AG04449 (cell line): ENCODE measurements at regions of chr4 and their contacts with region 1.

Region 1: GRCh38 chr4:15956179-15956850 is 6.7 kb downstream of the FGFBP2 start:
- DNase-seq: peak; percentile 5
- H3K4me3 ChIP-seq: no peak overlapping the region
- CTCF ChIP-seq: peak; percentile 94

Region 2: DNA sequence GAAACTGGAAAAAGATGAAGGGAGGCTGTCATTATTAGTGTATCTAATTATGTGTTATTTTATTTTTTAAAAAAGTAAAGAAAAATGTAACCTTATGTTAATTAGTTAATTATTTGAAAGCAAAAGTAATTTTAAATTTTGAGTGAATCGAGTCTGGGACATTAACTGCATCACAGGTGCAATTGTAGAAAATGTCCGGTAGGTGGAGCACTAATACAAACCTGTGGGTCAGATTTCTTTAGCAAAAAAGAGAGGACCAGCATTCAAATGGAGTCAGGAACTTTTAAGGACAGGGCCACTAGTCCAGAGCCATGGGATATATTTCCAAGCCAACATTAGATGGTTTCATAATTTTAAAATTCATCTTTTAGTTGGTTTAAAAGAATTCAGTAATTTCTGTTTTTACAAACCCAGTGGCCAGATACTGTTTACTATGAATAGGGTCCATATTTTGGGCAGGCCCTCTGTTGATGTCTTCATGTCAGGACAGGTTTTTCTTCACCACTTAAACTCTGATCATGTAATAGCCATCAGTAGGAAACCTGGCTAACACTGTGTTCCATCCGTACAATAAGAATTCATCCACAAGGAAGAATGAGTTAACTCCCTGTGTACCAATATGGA is 226.3 kb before region 1 on chr4:
- CTCF ChIA-PET with region 1: interaction called, 11 read pairs
- POLR2A ChIA-PET with region 1: no interaction called
- DNase-seq: no peak
- H3K4me3 ChIP-seq: no peak overlapping the region
- CTCF ChIP-seq: peak; percentile 59

Region 3: DNA sequence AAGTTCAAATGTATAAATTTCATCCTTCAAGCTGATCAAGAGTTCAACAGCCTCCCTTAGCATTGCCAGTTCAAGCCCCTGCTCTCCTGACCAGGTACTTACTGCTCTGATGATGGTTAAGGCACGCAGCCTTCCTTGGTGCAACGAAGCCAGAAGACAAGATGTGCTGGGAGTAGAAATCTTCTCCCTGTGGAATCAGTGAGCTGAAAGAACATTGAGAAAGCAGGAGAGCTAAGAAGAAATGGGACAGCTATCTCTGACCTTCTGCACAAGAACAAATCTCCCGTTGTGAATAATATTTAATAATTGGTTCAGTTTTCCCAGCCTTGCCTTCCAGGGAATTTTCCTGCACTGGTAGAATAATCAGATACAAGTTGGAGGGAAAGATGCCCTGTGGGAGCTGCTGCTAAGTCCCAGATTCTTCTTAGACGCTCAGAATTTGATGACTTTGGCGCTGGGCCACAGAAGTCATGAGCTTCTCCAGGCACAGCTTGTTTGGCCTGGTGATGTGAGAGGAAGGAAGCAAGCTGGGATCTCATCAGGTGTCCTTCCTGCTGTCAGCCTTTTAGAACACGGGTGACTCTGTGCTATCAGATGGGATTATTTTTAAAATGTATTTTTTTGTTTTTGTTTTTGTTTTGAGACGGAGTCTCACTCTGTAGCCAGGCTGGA is 100.4 kb before region 1 on chr4:
- CTCF ChIA-PET with region 1: interaction called, 14 read pairs
- POLR2A ChIA-PET with region 1: no interaction called
- DNase-seq: no peak
- H3K4me3 ChIP-seq: no peak overlapping the region
- CTCF ChIP-seq: no peak

Region 4: DNA sequence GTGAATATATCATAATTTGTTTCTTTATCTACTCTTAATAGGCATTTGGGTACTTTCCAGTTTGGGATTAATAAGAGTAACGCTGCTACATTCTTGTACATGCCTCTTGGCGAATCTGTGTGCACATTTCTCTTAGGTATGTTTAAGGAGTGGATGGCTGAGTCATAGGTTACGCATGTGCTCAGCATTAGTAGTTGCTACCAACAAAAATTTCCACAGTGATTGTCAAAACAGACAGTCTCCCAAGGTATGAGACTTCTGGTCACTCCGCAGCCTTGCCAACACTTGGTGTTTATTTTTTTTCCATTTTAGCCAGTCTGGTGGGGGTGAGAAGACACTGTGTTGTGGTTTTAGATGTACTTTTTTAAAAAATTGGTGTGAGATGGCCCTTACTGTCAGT is 62.4 kb before region 1 on chr4:
- CTCF ChIA-PET with region 1: interaction called, 574 read pairs
- POLR2A ChIA-PET with region 1: no interaction called
- DNase-seq: peak; percentile 95
- H3K4me3 ChIP-seq: no peak overlapping the region
- CTCF ChIP-seq: no peak

Region 5: DNA sequence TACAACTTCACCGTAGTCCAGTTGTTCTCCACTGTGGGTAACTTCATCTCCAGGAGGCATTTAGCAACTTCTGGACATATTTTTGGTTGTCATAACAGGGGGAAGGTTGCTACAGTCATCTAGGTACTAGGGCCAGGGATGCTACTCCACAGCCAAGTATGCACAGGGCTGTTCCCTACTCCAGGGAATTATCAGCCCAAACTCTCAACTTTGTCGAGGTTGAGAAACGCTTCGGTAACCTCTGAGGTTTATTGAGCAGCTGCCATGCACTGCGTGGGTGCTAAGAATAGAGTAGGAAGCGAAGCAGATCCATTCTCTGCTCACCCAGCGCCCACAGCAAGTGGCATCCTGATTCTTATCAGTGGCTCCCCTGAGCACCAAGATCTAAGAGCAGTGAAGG is 26.0 kb before region 1 on chr4:
- CTCF ChIA-PET with region 1: interaction called, 16 read pairs
- POLR2A ChIA-PET with region 1: no interaction called
- DNase-seq: no peak
- H3K4me3 ChIP-seq: no peak overlapping the region
- CTCF ChIP-seq: no peak

Region 6: GRCh38 chr4:15945516-15945915 is 10.8 kb before region 1 on chr4:
- CTCF ChIA-PET with region 1: interaction called, 13 read pairs
- POLR2A ChIA-PET with region 1: no interaction called
- DNase-seq: no peak
- H3K4me3 ChIP-seq: no peak overlapping the region
- CTCF ChIP-seq: no peak